ENCODE measurements at regions of chr1 and their contacts with region 1.

Region 1: GRCh38 chr1:147640553-147641165 is 29.7 kb downstream of the ACP6 start:
- DNase-seq: peak; percentile 32
- ATAC-seq: peak; percentile 96
- H3K4me3 ChIP-seq: no peak overlapping the region
- H3K27ac ChIP-seq: no peak overlapping the region
- H3K4me1 ChIP-seq: no peaks in the 10 kb centered on the region
- H3K27me3 ChIP-seq: no peaks in the 10 kb centered on the region
- CTCF ChIP-seq: peak; percentile 92

Region 2: DNA sequence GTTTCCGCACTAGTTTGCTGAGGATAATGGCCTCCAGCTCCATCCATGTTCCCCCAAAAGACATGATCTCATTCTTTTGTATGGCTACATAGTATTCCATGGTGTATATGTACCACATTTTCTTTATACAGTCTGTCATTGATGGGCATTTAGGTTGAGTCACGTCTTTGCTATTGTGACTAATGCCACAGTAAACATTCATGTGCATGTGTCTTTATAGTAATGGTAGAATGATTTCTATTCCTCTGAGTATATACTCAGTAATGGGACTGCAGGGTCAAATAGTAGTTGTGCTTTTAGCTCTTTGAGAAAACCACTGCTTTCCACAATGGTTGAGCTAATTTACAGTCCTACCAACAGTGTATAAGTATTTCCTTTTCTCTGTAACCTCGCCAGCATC is 177.6 kb before region 1 on chr1:
- CTCF ChIA-PET with region 1: no interaction called
- POLR2A ChIA-PET with region 1: no interaction called
- in situ Hi-C with region 1: no loop called
- intact Hi-C with region 1: no loop called
- DNase-seq: no peak
- ATAC-seq: no peak
- H3K4me3 ChIP-seq: no peak overlapping the region
- H3K27ac ChIP-seq: no peak overlapping the region
- H3K4me1 ChIP-seq: no peaks in the 10 kb centered on the region
- H3K27me3 ChIP-seq: no peaks in the 10 kb centered on the region
- CTCF ChIP-seq: no peak

Region 3: GRCh38 chr1:147494998-147495580 is 145.6 kb before region 1 on chr1:
- CTCF ChIA-PET with region 1: no interaction called
- POLR2A ChIA-PET with region 1: no interaction called
- in situ Hi-C with region 1: no loop called
- intact Hi-C with region 1: loop called (anchors 5 kb)
- DNase-seq: peak; percentile 46
- ATAC-seq: peak; percentile 99
- H3K4me3 ChIP-seq: no peak overlapping the region
- H3K27ac ChIP-seq: no peak overlapping the region
- H3K4me1 ChIP-seq: no peaks in the 10 kb centered on the region
- H3K27me3 ChIP-seq: 0 out of 2 replicates have a peak, but pooled peaks cover under 1% of the 10 kb centered on the region
- CTCF ChIP-seq: peak; percentile 95

Region 4: GRCh38 chr1:147567594-147568381 is 72.9 kb before region 1 on chr1:
- CTCF ChIA-PET with region 1: no interaction called
- POLR2A ChIA-PET with region 1: no interaction called
- in situ Hi-C with region 1: no loop called
- intact Hi-C with region 1: no loop called
- DNase-seq: no peak
- ATAC-seq: no peak
- H3K4me3 ChIP-seq: no peak overlapping the region
- H3K27ac ChIP-seq: no peak overlapping the region
- H3K4me1 ChIP-seq: no peaks in the 10 kb centered on the region
- H3K27me3 ChIP-seq: no peaks in the 10 kb centered on the region; the same call in 1 of the 2 replicates
- CTCF ChIP-seq: no peak

Region 5: DNA sequence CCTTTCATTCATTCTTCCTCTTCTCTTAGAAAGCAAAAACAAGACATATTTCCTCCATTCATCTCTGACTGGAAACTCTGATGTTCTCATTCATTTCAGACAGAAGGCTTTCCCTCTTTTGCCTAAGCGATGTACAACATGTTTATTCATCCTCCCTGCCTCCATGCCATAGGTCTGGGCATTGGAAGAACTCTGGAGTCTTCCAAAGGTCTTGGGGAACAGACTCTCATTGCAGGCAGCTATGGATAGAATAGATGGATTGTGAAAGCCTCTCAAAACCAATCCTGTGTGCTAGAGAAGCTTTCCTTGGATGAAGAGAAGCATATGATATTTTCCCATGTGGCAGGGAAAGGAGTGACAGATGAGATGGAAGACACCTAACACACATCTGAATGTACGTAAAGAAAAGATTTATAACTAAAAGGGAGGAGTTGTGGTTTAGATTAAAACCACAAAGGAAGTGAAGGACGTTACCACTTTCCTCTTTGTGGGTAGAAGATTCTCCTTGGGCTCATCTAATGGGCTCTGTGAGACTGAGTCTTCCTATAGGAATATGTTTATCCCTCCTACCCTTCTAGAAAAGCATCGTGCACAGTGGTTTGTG is 60.6 kb before region 1 on chr1:
- CTCF ChIA-PET with region 1: no interaction called
- POLR2A ChIA-PET with region 1: no interaction called
- in situ Hi-C with region 1: no loop called
- intact Hi-C with region 1: loop called (anchors 10 kb)
- DNase-seq: no peak
- ATAC-seq: no peak
- H3K4me3 ChIP-seq: no peak overlapping the region
- H3K27ac ChIP-seq: no peak overlapping the region
- H3K4me1 ChIP-seq: no peaks in the 10 kb centered on the region
- H3K27me3 ChIP-seq: peaks cover 11% of the 10 kb centered on the region
- CTCF ChIP-seq: no peak

Region 6: GRCh38 chr1:147599362-147600118 is 41.1 kb before region 1 on chr1:
- CTCF ChIA-PET with region 1: interaction called, 10 read pairs
- POLR2A ChIA-PET with region 1: no interaction called
- in situ Hi-C with region 1: no loop called
- intact Hi-C with region 1: no loop called
- DNase-seq: peak; percentile 32
- ATAC-seq: peak; percentile 94
- H3K4me3 ChIP-seq: peak overlapping the region; percentile 72 to 81
- H3K27ac ChIP-seq: peak overlapping the region; percentile 72
- H3K4me1 ChIP-seq: peaks cover 9% of the 10 kb centered on the region
- H3K27me3 ChIP-seq: peaks cover 14% of the 10 kb centered on the region
- CTCF ChIP-seq: no peak

Region 7: DNA sequence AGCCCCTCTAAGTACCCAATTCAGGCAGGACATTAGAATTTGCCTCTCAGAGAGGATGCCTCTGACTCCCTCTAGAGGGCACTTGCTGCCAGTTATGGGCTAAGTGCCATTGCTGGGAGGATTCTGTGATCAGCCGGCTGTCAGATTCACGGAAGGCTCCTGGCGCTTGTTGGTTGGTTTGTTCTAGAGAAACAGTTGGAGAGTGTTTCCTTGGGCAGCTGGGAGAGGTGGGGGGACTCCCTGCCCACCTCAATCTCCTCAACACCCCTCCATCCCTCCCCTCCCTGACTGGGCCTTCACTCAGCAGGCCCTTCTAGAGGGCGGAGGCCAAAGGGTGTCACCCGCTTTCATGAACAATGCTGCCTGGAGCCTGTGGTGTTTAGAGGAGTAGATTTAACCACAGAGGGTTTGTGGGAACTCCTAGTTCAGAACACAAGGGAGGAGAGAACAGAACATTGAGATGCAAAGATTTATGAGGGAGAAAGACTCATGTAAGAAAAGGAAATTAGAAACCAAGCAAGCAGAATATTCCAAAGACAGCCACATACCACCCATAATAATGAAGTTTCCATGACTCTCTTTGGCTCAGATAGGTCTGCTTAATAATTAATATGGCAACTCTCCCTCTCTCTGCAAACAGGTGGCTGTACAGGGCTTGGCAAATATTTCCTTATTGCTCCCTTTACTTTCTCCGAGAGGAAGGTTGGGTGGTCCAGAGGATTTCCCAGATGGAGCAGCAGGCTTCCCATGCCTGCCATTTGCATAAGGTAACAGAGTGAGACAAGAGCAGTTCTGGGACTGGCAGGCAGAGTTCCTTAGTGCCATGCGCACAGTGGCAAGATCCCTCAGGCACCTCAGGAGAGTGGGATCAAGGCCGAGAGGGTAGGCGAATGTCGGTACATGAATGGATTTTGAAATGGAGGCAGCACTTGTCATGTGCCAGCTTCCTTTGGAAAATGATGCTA is 59.7 kb after region 1 on chr1:
- CTCF ChIA-PET with region 1: no interaction called
- POLR2A ChIA-PET with region 1: no interaction called
- in situ Hi-C with region 1: no loop called
- intact Hi-C with region 1: loop called (anchors 10 kb)
- DNase-seq: no peak
- ATAC-seq: peak; percentile 98
- H3K4me3 ChIP-seq: no peak overlapping the region
- H3K27ac ChIP-seq: no peak overlapping the region
- H3K4me1 ChIP-seq: no peaks in the 10 kb centered on the region
- H3K27me3 ChIP-seq: no peaks in the 10 kb centered on the region
- CTCF ChIP-seq: peak; percentile 90

Region 8: DNA sequence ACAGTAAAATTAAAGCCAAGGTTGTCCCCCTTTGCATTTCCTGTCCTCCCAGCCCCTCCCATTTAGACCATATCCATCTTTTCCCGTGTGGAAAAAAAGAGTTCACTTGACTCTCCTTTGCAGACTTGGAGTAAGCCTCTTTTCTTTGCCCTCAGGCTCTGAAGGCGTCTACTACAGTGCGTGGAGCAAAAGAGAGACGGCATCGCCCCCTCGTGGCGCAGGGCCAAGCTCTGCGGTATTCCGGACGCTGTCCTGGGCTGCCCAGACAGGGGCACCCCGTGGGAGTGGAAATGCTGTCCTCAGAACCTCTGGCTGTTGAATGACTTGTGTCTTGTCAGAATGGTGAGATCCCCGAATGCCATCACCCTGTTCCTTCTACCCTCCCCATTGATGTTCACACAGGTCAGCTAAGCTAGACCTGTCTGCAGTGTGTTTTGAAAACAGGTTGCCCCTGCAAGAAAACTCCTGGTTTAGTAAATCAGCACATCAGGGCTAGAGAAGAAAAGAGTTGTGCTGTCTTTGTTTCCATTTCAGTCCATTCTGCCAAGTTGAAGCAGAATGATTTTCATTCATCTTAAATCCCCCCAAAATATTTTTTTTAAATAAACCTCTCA is 249.6 kb after region 1 on chr1:
- CTCF ChIA-PET with region 1: interaction called, 3 read pairs
- POLR2A ChIA-PET with region 1: no interaction called
- in situ Hi-C with region 1: no loop called
- intact Hi-C with region 1: loop called (anchors 5 kb)
- DNase-seq: no peak
- ATAC-seq: peak; percentile 95
- H3K4me3 ChIP-seq: no peak overlapping the region
- H3K27ac ChIP-seq: no peak overlapping the region
- H3K4me1 ChIP-seq: no peaks in the 10 kb centered on the region
- H3K27me3 ChIP-seq: no peaks in the 10 kb centered on the region
- CTCF ChIP-seq: peak; percentile 82